ENCODE measurements at regions of chr1 and their contacts with region 1.

Region 1: DNA sequence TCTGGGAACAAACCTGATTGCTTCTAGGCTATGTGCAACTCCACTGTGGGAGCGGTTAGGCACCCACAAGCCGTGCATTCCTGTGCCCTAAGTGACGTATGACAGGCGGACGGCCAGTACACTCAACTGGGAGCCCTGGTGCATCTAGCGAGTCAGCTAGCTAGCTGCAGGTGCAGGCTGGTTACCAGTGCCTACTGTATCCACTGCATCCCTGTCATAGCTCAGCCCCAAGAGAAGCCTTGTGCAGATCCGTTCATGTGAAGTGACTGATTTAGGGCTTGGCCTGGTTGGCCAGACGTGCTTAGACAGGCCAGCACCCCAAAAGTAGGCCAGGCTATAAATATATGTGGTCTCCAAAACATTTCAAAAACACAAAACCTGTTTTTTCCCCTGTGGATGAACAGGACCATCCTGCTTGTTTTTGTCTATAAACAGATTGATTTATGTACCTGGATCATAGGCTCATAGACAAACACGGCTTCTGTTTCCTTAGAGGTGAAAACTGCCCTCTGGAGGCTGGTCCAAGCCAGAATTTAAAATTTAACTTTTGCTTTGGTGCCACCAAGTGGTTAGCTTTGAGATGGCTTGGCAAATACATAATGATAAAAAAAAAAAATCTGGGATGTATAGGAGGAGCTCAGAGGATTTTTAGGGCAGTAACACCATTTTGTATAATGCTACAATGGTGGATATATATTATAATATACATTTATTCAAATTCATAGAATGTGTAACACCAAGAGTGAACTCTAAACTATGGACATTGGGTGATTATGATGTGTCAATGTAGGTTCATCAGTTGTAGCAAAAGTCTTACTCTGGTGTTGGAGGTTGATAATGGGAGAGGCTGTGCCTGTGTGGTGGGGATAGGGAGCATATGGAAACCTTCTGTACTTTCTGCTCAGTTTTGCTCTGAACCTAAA is 68.5 kb downstream of the GIPC2 start:
- DNase-seq: no peak
- H3K4me3 ChIP-seq: no peak overlapping the region
- H3K27ac ChIP-seq: peak overlapping the region; percentile 31
- H3K4me1 ChIP-seq: peaks cover 5% of the 10 kb centered on the region
- H3K27me3 ChIP-seq: no peaks in the 10 kb centered on the region
- CTCF ChIP-seq: peak; percentile 92

Region 2: GRCh38 chr1:77978969-77979876 is 135.1 kb before region 1 on chr1 and contains the start of gene FUBP1:
- intact Hi-C with region 1: loop called (anchors 5 kb)
- DNase-seq: peak; percentile 91
- H3K4me3 ChIP-seq: peak within 1 kb of the TSS; percentile 75
- H3K27ac ChIP-seq: peak within 1 kb of the TSS; percentile 99
- H3K4me1 ChIP-seq: peaks cover 72% of the 10 kb centered on the region
- H3K27me3 ChIP-seq: no peaks in the 10 kb centered on the region
- CTCF ChIP-seq: peak; percentile 88
- total RNA-seq, gene FUBP1: 55.7 TPM

Region 3: GRCh38 chr1:78019018-78019417 is 95.3 kb before region 1 on chr1:
- intact Hi-C with region 1: no loop called
- DNase-seq: no peak
- H3K4me3 ChIP-seq: no peak overlapping the region
- H3K27ac ChIP-seq: peak overlapping the region; percentile 20
- H3K4me1 ChIP-seq: peaks cover 34% of the 10 kb centered on the region
- H3K27me3 ChIP-seq: no peaks in the 10 kb centered on the region
- CTCF ChIP-seq: no peak